ENCODE measurements at regions of chr15 and their contacts with region 1.

Region 1: DNA sequence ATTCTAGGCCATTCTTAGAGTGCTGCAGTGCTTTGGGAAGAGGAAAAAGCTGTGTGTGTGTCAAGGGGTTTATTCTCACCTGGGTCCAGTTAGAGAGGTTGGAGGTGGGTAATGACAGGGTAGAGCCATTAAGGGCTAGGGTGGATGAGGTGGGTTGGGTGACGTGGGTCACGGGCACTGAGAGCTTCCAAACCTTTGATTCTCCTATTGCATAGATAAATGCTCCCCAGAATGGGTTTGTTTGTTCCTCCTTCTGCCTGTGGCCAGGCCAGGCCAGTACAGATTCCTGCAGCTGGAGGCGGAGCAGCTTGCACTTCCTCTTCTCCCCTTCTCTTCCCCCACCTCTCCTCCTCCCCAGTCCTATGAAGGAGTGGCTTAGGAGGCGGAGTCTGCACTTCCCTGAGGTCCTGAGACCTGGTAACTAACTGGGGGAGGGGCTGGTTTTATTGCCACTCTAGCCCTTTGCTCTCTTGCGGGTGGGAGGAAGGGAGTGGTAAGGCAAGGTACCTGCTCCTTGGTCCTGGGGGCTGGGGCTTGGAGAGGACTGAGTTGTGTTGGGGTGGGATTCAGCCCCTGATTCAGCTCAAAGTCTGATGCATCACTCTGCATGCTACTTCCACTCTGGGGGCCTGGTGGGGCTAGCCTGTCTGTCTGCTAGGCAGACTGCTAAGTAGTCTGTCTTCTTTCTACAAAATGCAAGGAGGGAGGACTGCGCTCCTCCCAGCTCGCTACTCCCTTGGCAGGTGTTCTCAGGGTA is 3.5 kb downstream of the SPINT1 start:
- DNase-seq: no peak
- ATAC-seq: peak; percentile 46
- H3K4me3 ChIP-seq: peak overlapping the region; percentile 6 to 95; a peak in 3 of 4 replicates
- H3K27ac ChIP-seq: peak overlapping the region; percentile 93
- H3K4me1 ChIP-seq: peaks cover 34 to 45% of the 10 kb centered on the region in 2 experiments
- H3K27me3 ChIP-seq: no peaks in the 10 kb centered on the region
- CTCF ChIP-seq: no peak
- POLR2A ChIP-seq: no peak
- RAD21 ChIP-seq: no peak

Region 2: DNA sequence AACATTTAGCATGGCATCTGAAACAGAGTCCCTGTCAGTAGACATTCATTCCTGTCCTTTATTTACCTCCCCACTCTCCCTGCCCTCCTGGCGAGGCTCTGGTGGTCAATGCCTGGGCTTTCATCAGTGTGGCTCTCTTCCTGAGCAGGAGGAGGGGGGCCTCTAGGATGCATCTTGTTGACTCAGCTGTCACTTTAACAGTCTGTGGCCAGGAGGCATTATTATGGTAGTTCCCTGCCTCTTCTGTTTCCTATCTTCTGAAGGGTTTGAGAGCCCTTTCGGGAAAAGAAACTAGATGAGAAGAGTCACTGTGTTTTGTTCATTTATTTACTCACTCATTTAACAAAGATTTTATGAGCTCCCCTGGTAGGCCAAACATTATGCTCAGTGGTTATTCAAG is 16.5 kb before region 1 on chr15:
- CTCF ChIA-PET with region 1: no interaction called
- POLR2A ChIA-PET with region 1: interaction called, 10 read pairs
- RAD21 ChIA-PET with region 1: interaction called in 1 of 2 experiments, 3 read pairs
- intact Hi-C with region 1: no loop called
- DNase-seq: no peak
- ATAC-seq: no peak
- H3K4me3 ChIP-seq: no peak overlapping the region
- H3K27ac ChIP-seq: no peak overlapping the region
- H3K4me1 ChIP-seq: peaks cover 32 to 43% of the 10 kb centered on the region in 2 experiments
- H3K27me3 ChIP-seq: no peaks in the 10 kb centered on the region
- CTCF ChIP-seq: no peak
- POLR2A ChIP-seq: no peak
- RAD21 ChIP-seq: no peak

Region 3: GRCh38 chr15:40873625-40874561 is 26.5 kb after region 1 on chr15 and contains the start of gene RHOV:
- CTCF ChIA-PET with region 1: interaction called, 4 read pairs
- POLR2A ChIA-PET with region 1: no interaction called
- RAD21 ChIA-PET with region 1: no interaction called
- intact Hi-C with region 1: loop called (anchors 1 kb)
- DNase-seq: peak; percentile 67
- ATAC-seq: peak; percentile 94
- H3K4me3 ChIP-seq: peak within 1 kb of the TSS; percentile 56 to 72
- H3K27ac ChIP-seq: peak within 1 kb of the TSS; percentile 74
- H3K4me1 ChIP-seq: peaks cover 36 to 48% of the 10 kb centered on the region in 2 experiments
- H3K27me3 ChIP-seq: no peaks in the 10 kb centered on the region
- CTCF ChIP-seq: peak; percentile 42 to 59 (median 43); a peak in 5 of 6 replicates
- POLR2A ChIP-seq: peak; percentile 84
- RAD21 ChIP-seq: peak; percentile 49
- total RNA-seq, gene RHOV: 6.0 TPM

Region 4: DNA sequence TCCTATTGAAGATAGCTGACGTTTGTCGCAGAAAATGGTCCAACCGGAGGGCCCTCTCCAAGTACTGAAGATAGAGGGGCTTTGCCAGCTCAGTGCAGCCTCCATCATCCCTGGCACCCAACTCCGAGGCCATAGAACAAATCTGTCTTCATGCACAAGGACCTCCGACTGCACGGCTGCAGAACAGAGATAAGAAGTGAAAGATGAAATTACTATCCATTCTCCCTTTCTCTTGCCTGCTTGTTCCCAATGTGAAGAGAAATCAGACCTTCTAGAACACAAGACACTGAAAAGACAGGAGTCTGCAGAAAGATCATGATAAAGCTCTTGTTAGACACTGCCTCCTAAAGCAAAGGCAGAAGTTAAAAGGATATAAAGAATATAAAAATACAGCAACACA is 248.8 kb after region 1 on chr15:
- CTCF ChIA-PET with region 1: no interaction called
- POLR2A ChIA-PET with region 1: no interaction called
- RAD21 ChIA-PET with region 1: no interaction called
- intact Hi-C with region 1: no loop called
- DNase-seq: no peak
- ATAC-seq: no peak
- H3K4me3 ChIP-seq: no peak overlapping the region
- H3K27ac ChIP-seq: no peak overlapping the region
- H3K4me1 ChIP-seq: peaks cover 2 to 10% of the 10 kb centered on the region in 2 experiments; a peak in 2 of 4 replicates
- H3K27me3 ChIP-seq: no peaks in the 10 kb centered on the region
- CTCF ChIP-seq: no peak
- POLR2A ChIP-seq: no peak
- RAD21 ChIP-seq: no peak